Psoas muscle (tissue), 8 donors: ENCODE measurements at regions of chr2 and their contacts with region 1.

Region 1: DNA sequence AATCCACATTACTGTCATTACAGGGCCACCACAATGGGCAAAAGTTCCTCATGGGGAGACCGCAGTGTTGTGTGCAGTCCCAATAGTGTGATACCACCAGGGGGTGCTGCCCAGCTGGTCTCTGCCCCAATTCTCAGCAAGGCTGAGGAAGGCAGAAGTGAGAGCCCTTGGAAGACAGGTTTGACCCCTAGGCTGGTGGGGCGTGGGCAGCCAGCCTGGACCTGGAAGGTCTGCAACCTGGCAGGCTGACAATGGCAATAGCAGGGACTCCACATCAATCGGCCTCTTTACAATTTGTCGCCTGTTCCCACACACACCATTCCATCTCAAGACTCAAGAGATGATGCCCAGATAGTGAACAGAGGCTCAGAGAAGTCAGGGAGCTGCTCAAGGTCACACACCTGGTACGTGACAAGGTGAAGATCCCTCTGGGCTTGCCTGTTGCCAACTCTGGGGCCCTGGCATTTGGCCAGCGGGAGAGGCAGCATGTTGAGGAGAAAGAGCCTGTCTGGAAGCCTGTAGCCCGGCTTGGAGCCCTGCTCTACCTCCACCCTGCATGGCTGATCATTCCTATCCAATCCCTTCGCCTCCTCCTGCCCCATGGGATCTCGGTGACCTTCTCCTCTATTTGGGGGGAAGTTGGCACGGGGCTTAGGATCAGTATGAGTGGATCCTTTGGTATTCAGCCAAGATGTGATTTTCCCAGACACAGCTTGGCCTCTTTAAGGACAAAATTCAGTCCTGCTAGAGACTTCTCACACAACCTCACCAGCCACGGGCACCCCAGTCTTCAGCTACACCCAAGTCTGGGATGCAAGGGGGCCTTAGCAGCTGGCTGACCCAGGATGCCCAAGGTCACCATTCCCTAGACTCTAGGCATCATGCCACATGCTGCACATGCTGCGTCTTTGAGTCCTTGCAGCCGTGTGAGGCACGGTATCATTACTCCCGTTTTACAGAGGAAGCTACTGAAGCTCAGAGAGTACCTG is 2.9 kb upstream of the ATOH8 start:
- DNase-seq: peak; percentile 75 to 84
- ATAC-seq: peak; percentile 57 to 68 (median 62)
- H3K4me3 ChIP-seq: peak overlapping the region; percentile 1
- H3K27ac ChIP-seq: peak overlapping the region; percentile 30
- H3K4me1 ChIP-seq: peaks cover 45% of the 10 kb centered on the region
- H3K27me3 ChIP-seq: no peaks in the 10 kb centered on the region
- CTCF ChIP-seq: peak; percentile 83

Region 2: DNA sequence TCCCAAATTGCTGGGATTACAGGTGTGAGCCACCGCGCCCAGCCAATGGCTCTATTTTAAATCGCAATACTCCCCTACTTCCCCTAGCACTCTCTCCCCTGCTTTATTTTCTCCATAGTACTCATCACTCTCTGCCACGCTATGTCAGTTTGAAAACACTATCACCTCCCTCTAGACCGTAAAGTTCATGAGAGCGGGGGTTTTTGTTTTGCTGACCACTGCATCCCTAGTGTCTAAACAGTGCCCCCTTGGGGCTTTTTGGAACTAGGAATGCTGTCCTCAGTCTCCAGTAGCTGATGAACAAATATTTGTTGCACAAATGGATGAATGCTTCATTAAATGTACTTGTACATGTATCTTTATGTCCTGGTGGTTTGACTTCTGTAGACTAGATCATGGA is 47.0 kb after region 1 on chr2:
- intact Hi-C with region 1: loop called in 1 of 2 experiments (anchors 5 kb)
- DNase-seq: no peak
- ATAC-seq: peak in 3 of 4 donors; percentile 36 to 57 (median 57)
- H3K4me3 ChIP-seq: no peak overlapping the region
- H3K27ac ChIP-seq: no peak overlapping the region
- H3K4me1 ChIP-seq: peaks cover 33% of the 10 kb centered on the region
- H3K27me3 ChIP-seq: no peaks in the 10 kb centered on the region
- CTCF ChIP-seq: peak; percentile 46

Region 3: GRCh38 chr2:85804583-85804982 is 53.7 kb after region 1 on chr2:
- intact Hi-C with region 1: loop called (anchors 2 to 5 kb)
- DNase-seq: no peak
- ATAC-seq: peak; percentile 52 to 65 (median 55)
- H3K4me3 ChIP-seq: no peak overlapping the region
- H3K27ac ChIP-seq: no peak overlapping the region
- H3K4me1 ChIP-seq: peaks cover 8% of the 10 kb centered on the region
- H3K27me3 ChIP-seq: no peaks in the 10 kb centered on the region
- CTCF ChIP-seq: peak; percentile 64

Region 4: DNA sequence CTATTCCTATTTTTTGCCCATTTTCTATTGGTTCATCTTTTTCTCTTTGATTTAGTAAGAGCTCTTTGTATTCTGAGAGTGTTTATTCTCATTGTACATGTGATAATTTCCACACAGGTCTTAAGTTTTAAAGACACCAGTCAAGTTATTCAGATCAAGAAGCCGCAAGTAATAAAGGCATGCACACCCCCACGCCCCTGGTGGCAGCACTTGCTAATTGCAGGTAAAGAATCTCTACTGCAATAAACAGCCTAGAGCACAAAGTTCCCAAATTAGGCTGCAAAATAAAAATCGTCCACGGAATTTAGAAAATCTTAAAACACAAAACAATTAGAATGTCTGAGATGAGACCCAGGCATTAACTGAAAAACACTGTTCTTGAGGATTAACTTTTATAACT is 92.7 kb after region 1 on chr2:
- intact Hi-C with region 1: no loop called
- DNase-seq: no peak
- ATAC-seq: no peak
- H3K4me3 ChIP-seq: no peak overlapping the region
- H3K27ac ChIP-seq: no peak overlapping the region
- H3K4me1 ChIP-seq: no peaks in the 10 kb centered on the region
- H3K27me3 ChIP-seq: no peaks in the 10 kb centered on the region
- CTCF ChIP-seq: peak; percentile 19